Activated CD4-positive, alpha-beta memory T cell treated with anti-CD3 and anti-CD28 coated beads for 36 hours (primary cell): ENCODE measurements at regions of chr1 and their contacts with region 1.

Region 1: DNA sequence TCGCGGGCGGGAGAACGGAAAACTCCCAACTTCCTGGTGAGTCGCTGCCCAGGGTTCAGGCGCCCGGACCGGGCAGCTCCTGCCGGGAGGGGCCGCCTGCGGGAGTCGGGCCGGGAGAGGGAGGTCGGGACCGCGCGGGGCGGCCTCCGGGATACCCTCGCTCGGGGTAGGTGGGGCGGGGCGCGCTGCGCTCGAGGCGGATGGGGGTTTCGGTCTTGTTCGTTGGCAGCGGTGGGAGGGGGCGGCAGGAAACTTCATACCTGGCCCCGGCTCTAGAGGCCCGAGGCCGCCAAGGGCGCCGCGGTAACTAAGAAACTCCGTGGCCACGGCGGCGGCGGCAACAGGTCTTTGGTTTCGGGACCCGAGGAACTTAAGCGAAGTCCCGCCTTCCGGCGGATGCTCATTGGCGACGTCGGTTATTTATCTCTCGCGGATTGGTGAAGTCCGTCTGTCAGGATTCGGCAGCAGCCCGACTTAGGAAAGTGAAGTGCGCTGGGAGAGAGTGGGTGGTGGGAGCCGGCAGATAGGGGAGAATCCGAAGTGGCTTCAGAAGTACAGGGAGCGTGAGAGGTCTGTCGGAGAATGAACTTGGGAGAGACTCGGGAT is 546 bp downstream of the NEK7 start:
- DNase-seq: peak; percentile 89
- H3K4me3 Mint-ChIP-seq: peak overlapping the region; percentile 98
- H3K27ac Mint-ChIP-seq: peak overlapping the region; percentile 97
- H3K4me1 Mint-ChIP-seq: peaks cover 33% of the 10 kb centered on the region
- H3K27me3 Mint-ChIP-seq: no peaks in the 10 kb centered on the region

Region 2: GRCh38 chr1:197775282-197776262 is 381.8 kb before region 1 on chr1 and contains the start of gene DENND1B:
- CTCF ChIA-PET with region 1: no interaction called
- POLR2A ChIA-PET with region 1: no interaction called
- intact Hi-C with region 1: loop called (anchors 2 kb)
- DNase-seq: peak; percentile 87
- H3K4me3 Mint-ChIP-seq: peak within 1 kb of the TSS; percentile 92
- H3K27ac Mint-ChIP-seq: peak within 1 kb of the TSS; percentile 100
- H3K4me1 Mint-ChIP-seq: peaks cover 69% of the 10 kb centered on the region
- H3K27me3 Mint-ChIP-seq: no peaks in the 10 kb centered on the region
- total RNA-seq, gene DENND1B: 12.5 to 15.6 TPM

Region 3: DNA sequence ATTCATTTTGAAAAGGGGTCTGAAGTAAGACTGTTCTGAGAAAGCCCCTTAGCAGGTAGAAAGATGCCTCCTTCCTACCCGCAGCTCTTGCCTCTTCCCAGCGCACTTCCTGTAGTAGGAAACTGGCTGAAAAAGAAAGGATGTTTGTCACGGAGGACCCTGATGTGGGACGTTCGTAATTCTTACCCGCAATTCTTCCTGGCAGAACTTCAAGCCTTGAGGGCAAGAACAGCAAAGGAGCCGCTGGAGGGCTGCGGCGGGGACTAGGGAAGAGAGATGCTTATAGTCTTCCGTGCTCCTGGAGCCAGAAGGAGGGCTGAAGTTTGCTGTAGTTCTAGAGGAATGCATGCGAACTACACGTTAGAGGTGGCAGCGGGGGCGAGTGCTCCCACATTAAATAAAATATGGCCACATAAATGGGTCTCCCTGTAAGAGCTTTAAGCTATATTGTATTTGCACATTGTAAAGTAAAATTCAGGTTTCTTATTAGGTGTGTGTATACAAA is 248.6 kb before region 1 on chr1:
- CTCF ChIA-PET with region 1: no interaction called
- POLR2A ChIA-PET with region 1: no interaction called
- intact Hi-C with region 1: no loop called
- DNase-seq: no peak
- H3K4me3 Mint-ChIP-seq: peak overlapping the region; percentile 31
- H3K27ac Mint-ChIP-seq: no peak overlapping the region
- H3K4me1 Mint-ChIP-seq: peaks cover 48% of the 10 kb centered on the region
- H3K27me3 Mint-ChIP-seq: peaks cover 89% of the 10 kb centered on the region

Region 4: DNA sequence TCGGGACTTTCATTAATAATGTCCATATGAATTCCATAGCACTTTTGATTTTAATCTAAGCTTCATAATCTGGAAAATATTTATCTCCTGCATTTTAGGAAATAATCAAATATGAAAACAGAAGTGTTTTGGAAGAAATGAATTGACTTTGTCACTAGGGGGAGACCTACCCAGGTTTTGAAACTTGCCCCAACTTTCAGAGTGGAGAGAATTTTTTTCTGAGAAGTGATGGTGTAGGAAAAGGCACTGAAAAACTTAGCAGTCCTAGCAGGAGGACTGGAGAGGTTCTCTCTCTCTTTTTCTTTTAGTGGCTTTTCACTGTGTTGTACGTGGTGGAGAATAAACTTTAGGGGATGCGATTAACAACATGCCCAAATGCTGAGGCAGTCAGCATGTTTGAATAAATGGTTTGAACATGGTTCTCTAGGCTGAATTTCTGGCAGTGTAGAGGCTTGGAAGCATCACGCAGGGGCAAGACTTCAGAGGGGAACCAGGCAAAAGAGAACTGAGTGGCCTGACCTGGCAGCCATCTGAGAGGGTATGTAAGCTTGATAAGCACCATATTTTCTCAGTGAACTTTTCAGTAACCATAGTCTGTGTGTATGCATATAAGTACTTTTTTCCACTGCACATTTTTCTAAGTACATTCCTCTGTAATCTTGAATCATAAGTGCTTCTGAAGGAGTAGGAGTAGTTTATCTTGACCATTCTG is 68.8 kb before region 1 on chr1:
- CTCF ChIA-PET with region 1: interaction called, 6 read pairs
- POLR2A ChIA-PET with region 1: no interaction called
- intact Hi-C with region 1: loop called (anchors 1 kb)
- DNase-seq: no peak
- H3K4me3 Mint-ChIP-seq: no peak overlapping the region
- H3K27ac Mint-ChIP-seq: no peak overlapping the region
- H3K4me1 Mint-ChIP-seq: peaks cover 7% of the 10 kb centered on the region
- H3K27me3 Mint-ChIP-seq: peaks cover 2% of the 10 kb centered on the region

Region 5: GRCh38 chr1:198175423-198176170 is 18.3 kb after region 1 on chr1:
- CTCF ChIA-PET with region 1: interaction called, 5 read pairs
- POLR2A ChIA-PET with region 1: interaction called, 9 read pairs
- intact Hi-C with region 1: loop called (anchors 1 kb)
- DNase-seq: no peak
- H3K4me3 Mint-ChIP-seq: peak overlapping the region; percentile 9
- H3K27ac Mint-ChIP-seq: peak overlapping the region; percentile 72
- H3K4me1 Mint-ChIP-seq: peaks cover 83% of the 10 kb centered on the region
- H3K27me3 Mint-ChIP-seq: no peaks in the 10 kb centered on the region

Region 6: GRCh38 chr1:198359024-198359653 is 201.8 kb after region 1 on chr1:
- CTCF ChIA-PET with region 1: interaction called, 6 read pairs
- POLR2A ChIA-PET with region 1: no interaction called
- intact Hi-C with region 1: loop called (anchors 2 kb)
- DNase-seq: no peak
- H3K4me3 Mint-ChIP-seq: no peak overlapping the region
- H3K27ac Mint-ChIP-seq: no peak overlapping the region
- H3K4me1 Mint-ChIP-seq: peaks cover 8% of the 10 kb centered on the region
- H3K27me3 Mint-ChIP-seq: no peaks in the 10 kb centered on the region

Region 7: GRCh38 chr1:198620951-198621824 is 463.8 kb after region 1 on chr1:
- CTCF ChIA-PET with region 1: no interaction called
- POLR2A ChIA-PET with region 1: no interaction called
- intact Hi-C with region 1: loop called (anchors 2 kb)
- DNase-seq: peak; percentile 84
- H3K4me3 Mint-ChIP-seq: peak overlapping the region; percentile 74
- H3K27ac Mint-ChIP-seq: peak overlapping the region; percentile 94
- H3K4me1 Mint-ChIP-seq: peaks cover 87% of the 10 kb centered on the region
- H3K27me3 Mint-ChIP-seq: no peaks in the 10 kb centered on the region